Heart right ventricle (tissue), 16 donors: ENCODE measurements at regions of chr7 and their contacts with region 1.

Region 1: DNA sequence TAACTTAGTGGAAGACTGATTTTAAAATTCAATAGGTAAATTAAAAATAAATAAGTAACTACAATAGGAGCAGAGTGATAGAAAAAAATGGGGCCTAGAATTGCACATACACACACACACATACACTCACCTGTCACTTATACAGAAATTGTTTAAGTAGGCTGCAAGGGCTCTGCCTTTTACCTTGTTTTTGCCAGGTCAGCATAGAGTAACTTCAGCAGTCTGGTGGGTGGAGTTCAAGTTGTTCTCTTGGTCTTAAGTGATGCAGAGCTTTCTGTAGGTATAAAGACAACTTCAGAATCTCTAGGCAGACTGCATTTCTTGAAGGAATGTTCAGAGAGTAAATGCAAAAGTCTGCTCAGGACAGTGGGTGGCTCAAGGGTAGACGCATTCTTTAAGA is 457.0 kb downstream of the INHBA start:
- DNase-seq: no peak
- ATAC-seq: no peak
- H3K4me3 ChIP-seq: no peak overlapping the region
- H3K27ac ChIP-seq: no peak overlapping the region
- H3K4me1 ChIP-seq: no peaks in the 10 kb centered on the region
- H3K27me3 ChIP-seq: no peaks in the 10 kb centered on the region
- CTCF ChIP-seq: no peak

Region 2: GRCh38 chr7:40885503-40885902 is 360.4 kb before region 1 on chr7:
- intact Hi-C with region 1: no loop called
- DNase-seq: no peak
- ATAC-seq: peak in 2 of 8 donors; percentile 39 to 48
- H3K4me3 ChIP-seq: no peak overlapping the region
- H3K27ac ChIP-seq: no peak overlapping the region
- H3K4me1 ChIP-seq: no peaks in the 10 kb centered on the region
- H3K27me3 ChIP-seq: no peaks in the 10 kb centered on the region
- CTCF ChIP-seq: no peak

Region 3: GRCh38 chr7:41232086-41232485 is 13.8 kb before region 1 on chr7:
- intact Hi-C with region 1: loop called in 1 of 10 experiments (anchors 1 kb)
- DNase-seq: no peak
- ATAC-seq: no peak
- H3K4me3 ChIP-seq: no peak overlapping the region
- H3K27ac ChIP-seq: no peak overlapping the region
- H3K4me1 ChIP-seq: no peaks in the 10 kb centered on the region
- H3K27me3 ChIP-seq: no peaks in the 10 kb centered on the region
- CTCF ChIP-seq: no peak